IMR-90 (cell line): ENCODE measurements at regions of chr13 and their contacts with region 1.

Region 1: DNA sequence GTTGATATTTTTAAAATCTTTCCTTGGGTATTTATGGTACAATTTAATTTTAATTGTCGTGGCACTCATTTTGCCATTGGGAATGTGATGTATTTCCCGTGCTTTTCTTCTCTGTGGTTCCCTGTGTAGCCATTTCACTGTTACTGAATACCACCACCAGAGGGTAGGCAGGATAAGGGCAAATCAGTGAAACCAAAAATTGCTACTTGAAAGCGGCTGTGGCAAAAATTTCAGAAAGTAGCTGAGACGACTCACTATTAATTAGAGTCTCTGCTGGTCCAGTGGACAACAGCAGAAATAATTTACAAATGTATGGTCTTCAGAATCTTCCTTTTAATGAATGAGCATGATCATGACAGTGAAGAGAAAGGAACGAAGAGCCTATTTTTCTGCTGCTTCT is 34.4 kb upstream of the MIR17HG start:
- DNase-seq: peak; percentile 1
- ATAC-seq: no peak
- H3K4me3 ChIP-seq: no peak overlapping the region
- H3K27ac ChIP-seq: no peak overlapping the region
- H3K4me1 ChIP-seq: no peaks in the 10 kb centered on the region
- H3K27me3 ChIP-seq: no peaks in the 10 kb centered on the region; the same call in 1 of the 2 replicates
- CTCF ChIP-seq: peak; percentile 26
- POLR2A ChIP-seq: no peak
- RAD21 ChIP-seq: peak; percentile 18; the same call in 1 of the 2 replicates

Region 2: DNA sequence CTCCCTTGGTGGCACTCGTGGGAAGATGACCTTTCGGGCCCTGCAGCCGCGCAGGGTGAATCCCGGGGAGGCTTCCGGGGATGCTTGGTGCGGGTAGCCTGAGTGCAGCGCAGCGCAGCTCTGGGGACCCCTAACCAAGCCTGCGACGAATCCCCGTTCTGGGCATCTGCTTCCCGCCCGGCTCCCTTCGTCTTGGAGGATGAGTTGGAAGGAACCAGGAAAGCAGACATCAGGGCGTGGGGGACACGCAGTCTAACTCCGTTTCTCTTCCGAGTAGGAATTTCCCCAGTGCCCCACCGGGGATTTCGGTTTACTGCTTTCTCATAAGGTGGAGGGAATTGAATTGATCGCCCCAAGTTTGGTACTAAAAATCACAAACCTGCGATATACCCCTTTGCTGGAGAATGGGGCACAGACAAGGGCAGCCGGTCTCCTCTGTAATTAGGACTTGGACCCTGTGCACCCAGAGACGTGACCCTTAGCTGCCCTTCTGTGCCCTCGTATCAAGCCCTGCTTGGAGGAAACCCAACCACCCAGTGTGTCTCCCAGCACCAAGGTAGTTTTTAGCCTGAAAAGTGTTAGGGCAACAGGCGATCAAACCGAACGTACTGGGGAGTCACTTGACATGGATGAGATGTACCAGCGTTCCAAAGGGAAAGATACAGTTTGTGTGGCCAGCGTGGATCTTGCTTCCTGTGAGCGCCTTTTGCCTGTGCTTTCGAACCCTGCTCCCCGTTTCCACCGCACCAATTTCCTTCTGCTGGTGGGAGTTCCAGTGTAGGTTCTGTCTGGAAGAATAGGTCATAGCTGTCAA is 86.4 kb after region 1 on chr13:
- CTCF ChIA-PET with region 1: no interaction called
- POLR2A ChIA-PET with region 1: no interaction called
- dilution Hi-C with region 1: no loop called
- in situ Hi-C with region 1: no loop called
- intact Hi-C with region 1: loop called (anchors 5 kb)
- DNase-seq: no peak
- ATAC-seq: no peak
- H3K4me3 ChIP-seq: peak overlapping the region; percentile 47; the same call in 1 of the 2 replicates
- H3K27ac ChIP-seq: no peak overlapping the region
- H3K4me1 ChIP-seq: no peaks in the 10 kb centered on the region
- H3K27me3 ChIP-seq: peaks cover 22% of the 10 kb centered on the region
- CTCF ChIP-seq: no peak
- POLR2A ChIP-seq: no peak
- RAD21 ChIP-seq: no peak